ENCODE measurements at regions of chr19 and their contacts with region 1.

Region 1: DNA sequence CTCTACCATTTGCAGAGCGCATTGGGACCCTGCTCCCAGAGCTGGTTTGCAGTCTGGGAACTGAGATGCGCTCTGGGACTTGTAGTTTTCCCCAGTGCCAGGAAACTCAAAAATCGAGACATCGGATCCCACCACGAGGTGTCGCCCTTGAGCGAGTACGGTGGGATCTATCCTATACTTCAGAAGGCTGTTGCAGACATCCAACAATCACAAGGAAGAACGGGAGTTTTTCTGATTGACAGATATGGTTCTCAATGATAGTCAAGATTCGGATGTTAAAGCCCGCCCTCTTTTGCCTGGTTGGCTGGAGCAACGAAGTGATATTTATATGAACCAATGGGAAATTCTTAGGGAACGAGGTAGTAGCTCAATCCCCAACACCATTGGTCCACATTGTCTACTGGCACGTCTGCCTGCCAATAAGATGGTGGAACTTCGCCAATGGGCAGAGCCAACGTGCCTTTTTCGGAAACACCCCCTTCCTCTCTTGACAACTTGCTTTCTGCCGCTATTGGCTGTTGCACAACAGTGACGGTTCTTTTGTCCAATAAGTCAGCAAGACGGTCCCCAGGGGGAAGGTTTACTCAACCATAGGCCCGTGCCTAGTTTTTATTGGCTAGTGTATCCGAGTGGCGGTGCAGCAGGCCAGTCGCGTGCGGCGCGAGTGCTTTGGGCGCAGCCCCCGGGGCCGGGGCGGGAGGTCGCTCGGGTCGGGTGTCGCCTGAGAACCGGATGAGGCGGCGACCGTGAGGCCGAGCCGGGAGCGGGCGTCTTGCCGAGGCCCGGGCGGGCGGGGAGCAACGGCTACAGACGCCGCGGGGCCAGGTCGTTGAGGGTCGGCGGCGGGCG is at the start of gene DNM2:
- DNase-seq: peak; percentile 95
- H3K4me3 Mint-ChIP-seq: peak within 1 kb of the TSS; percentile 90
- H3K27ac Mint-ChIP-seq: peak within 1 kb of the TSS; percentile 56
- H3K4me1 Mint-ChIP-seq: peaks cover 17% of the 10 kb centered on the region
- H3K27me3 Mint-ChIP-seq: no peaks in the 10 kb centered on the region
- CTCF ChIP-seq: peak; percentile 19
- total RNA-seq, gene DNM2: 126 and 138 TPM in 2 replicates

Region 2: DNA sequence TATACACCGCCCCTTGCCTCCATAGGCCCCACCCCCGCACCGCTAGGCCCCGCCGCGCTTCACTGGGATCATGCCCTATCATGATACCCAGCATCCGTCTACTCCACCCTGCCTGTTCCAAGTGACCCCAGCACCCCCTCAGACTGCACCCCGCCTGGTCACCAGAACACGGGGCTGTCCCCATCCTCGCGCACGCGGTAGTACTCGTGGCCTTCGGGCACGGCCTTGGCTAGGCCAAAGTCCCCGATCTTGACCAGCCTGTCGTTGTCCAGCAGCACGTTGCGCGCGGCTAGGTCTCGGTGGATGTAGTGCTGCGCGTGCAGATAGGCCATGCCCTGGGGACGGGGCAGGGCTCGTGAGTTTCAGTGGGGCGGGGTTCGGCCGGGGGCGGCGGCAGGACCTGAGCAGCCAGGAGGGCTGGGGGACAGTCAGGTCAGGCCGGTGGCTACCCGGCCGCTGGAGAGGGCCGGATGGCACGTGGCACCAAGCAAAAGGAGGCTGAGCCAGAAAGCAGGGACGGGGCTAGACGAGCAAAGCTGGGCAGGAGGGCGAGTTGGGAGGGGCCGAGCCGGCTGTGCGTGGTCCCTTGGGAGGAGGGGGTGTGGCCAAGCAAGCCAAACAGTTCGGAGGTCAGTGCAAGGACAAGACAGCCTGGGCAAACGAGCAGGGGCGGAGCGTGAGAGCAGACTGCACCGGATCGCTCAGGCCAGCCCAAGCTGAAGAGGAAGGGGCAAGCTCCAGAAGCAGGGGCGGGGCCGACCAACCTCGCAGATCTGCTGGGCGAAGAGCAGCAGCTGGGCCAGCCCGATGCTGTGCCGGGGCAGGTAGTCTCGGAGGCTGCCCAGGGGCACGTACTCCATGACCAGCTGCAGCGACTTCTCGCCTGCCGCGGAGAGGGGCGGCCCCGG is 364.6 kb before region 1 on chr19:
- CTCF ChIA-PET with region 1: no interaction called
- intact Hi-C with region 1: no loop called
- DNase-seq: no peak
- H3K4me3 Mint-ChIP-seq: no peak overlapping the region
- H3K27ac Mint-ChIP-seq: no peak overlapping the region
- H3K4me1 Mint-ChIP-seq: no peaks in the 10 kb centered on the region
- H3K27me3 Mint-ChIP-seq: no peaks in the 10 kb centered on the region
- CTCF ChIP-seq: no peak

Region 3: GRCh38 chr19:10653715-10654492 is 63.7 kb before region 1 on chr19 and contains the start of gene ILF3:
- CTCF ChIA-PET with region 1: no interaction called
- intact Hi-C with region 1: no loop called
- DNase-seq: peak; percentile 95
- H3K4me3 Mint-ChIP-seq: peak within 1 kb of the TSS; percentile 82
- H3K27ac Mint-ChIP-seq: peak within 1 kb of the TSS; percentile 96
- H3K4me1 Mint-ChIP-seq: peaks cover 7% of the 10 kb centered on the region
- H3K27me3 Mint-ChIP-seq: no peaks in the 10 kb centered on the region
- CTCF ChIP-seq: no peak
- total RNA-seq, gene ILF3: 262 and 267 TPM in 2 replicates

Region 4: GRCh38 chr19:10677751-10678150 is 39.8 kb before region 1 on chr19:
- CTCF ChIA-PET with region 1: no interaction called
- intact Hi-C with region 1: no loop called
- DNase-seq: no peak
- H3K4me3 Mint-ChIP-seq: no peak overlapping the region
- H3K27ac Mint-ChIP-seq: no peak overlapping the region
- H3K4me1 Mint-ChIP-seq: no peaks in the 10 kb centered on the region
- H3K27me3 Mint-ChIP-seq: no peaks in the 10 kb centered on the region
- CTCF ChIP-seq: no peak

Region 5: DNA sequence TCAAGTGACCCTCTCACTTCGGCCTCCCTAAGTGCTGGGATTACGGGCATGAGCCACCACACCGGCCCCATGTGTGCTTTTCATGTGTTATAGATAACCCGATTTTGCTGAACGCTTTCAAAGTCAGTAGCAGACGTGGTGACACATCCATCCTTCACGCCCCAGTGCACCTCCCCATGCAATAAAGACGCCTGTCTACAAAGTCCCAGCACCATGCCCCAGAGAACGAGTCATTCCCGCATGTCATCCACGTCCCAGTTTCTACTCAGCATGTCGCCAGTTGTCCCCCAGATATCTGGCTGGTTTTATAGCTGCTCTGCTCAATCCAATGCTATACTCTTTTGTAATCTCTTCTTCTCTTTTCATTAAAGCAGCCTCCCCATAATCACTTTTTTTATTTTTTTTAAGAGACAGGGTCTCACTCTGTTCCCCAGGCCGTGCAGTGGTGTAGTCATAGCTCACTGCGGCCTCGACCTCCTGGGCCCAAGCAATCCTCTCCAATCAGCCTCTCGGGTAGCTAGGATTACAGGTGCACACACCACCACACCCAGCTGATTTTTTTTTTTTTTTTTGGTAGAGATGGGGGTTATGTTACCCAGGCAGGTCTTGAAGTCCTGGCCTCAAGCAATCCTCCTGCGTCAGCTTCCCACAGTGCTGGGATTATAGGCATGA is 42.8 kb after region 1 on chr19:
- CTCF ChIA-PET with region 1: no interaction called
- intact Hi-C with region 1: loop called (anchors 5 kb)
- DNase-seq: no peak
- H3K4me3 Mint-ChIP-seq: no peak overlapping the region
- H3K27ac Mint-ChIP-seq: peak overlapping the region; percentile 69
- H3K4me1 Mint-ChIP-seq: peaks cover 43% of the 10 kb centered on the region
- H3K27me3 Mint-ChIP-seq: no peaks in the 10 kb centered on the region
- CTCF ChIP-seq: no peak

Region 6: DNA sequence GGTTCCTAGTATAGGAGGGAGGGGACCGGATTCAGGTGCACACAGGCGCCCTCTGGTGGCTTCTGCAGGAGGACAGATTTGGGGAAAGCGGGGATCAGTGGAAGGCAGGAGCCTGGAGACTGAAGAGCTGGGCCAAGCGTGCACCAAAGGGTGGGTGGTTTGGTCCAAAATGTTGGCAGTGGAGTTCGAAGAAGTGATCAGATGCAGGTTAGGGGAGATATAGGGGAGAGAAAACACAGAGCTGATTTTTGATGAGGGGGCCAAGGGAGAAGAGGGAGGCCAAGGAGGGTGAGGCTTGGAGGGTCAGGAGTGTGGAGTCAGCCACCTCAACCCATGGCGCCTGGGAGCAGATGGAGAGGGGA is 146.9 kb after region 1 on chr19:
- CTCF ChIA-PET with region 1: interaction called, 21 read pairs
- intact Hi-C with region 1: loop called (anchors 2 kb)
- DNase-seq: peak; percentile 81
- H3K4me3 Mint-ChIP-seq: no peak overlapping the region
- H3K27ac Mint-ChIP-seq: no peak overlapping the region
- H3K4me1 Mint-ChIP-seq: peaks cover 11% of the 10 kb centered on the region
- H3K27me3 Mint-ChIP-seq: no peaks in the 10 kb centered on the region
- CTCF ChIP-seq: peak; percentile 62

Measured in Calu3 (cell line).